ENCODE measurements at regions of chr1 and their contacts with region 1.

Region 1: GRCh38 chr1:111778541-111779051 is 22.9 kb downstream of the DDX20 start:
- DNase-seq: no peak
- ATAC-seq: peak; percentile 49
- H3K4me3 ChIP-seq: no peak overlapping the region
- H3K27ac ChIP-seq: peak overlapping the region; percentile 73; the same call in 1 of the 2 replicates
- H3K4me1 ChIP-seq: peaks cover 23% of the 10 kb centered on the region
- H3K27me3 ChIP-seq: peaks cover 8% of the 10 kb centered on the region
- CTCF ChIP-seq: no peak
- POLR2A ChIP-seq: no peak
- RAD21 ChIP-seq: no peak

Region 2: DNA sequence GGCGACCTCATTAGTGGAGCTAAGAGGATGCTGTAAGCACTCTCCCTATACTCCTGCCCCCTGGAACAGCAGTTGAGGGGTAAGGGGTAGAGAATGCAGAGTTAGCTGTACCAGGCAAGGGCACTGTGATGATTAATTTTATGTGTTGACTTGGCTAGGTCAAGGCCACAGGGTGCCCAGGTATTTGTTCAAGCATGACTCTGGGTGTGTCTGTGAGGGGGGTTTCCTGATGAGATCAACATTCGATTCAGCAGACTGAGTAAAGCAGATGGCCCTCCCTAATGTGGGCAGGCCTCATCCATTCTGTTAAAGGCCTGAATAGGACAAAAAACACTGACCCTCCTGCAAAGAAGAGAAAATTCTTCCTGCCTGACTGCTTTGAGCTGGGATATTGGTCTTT is 100.0 kb after region 1 on chr1:
- CTCF ChIA-PET with region 1: no interaction called
- POLR2A ChIA-PET with region 1: no interaction called
- dilution Hi-C with region 1: no loop called
- in situ Hi-C with region 1: no loop called
- intact Hi-C with region 1: loop called (anchors 5 kb)
- DNase-seq: no peak
- ATAC-seq: peak; percentile 13
- H3K4me3 ChIP-seq: no peak overlapping the region
- H3K27ac ChIP-seq: peak overlapping the region; percentile 71
- H3K4me1 ChIP-seq: peaks cover 15% of the 10 kb centered on the region
- H3K27me3 ChIP-seq: peaks cover 12% of the 10 kb centered on the region
- CTCF ChIP-seq: no peak
- POLR2A ChIP-seq: no peak
- RAD21 ChIP-seq: no peak

Region 3: GRCh38 chr1:111990878-111991718 is 212.5 kb after region 1 on chr1:
- CTCF ChIA-PET with region 1: no interaction called
- POLR2A ChIA-PET with region 1: no interaction called
- dilution Hi-C with region 1: no loop called
- in situ Hi-C with region 1: no loop called
- intact Hi-C with region 1: loop called (anchors 5 kb)
- DNase-seq: no peak
- ATAC-seq: peak; percentile 30
- H3K4me3 ChIP-seq: no peak overlapping the region
- H3K27ac ChIP-seq: no peak overlapping the region
- H3K4me1 ChIP-seq: no peaks in the 10 kb centered on the region
- H3K27me3 ChIP-seq: peaks cover 63% of the 10 kb centered on the region
- CTCF ChIP-seq: 0 out of 2 replicates have a peak, but pooled peaks have one; percentile 11
- POLR2A ChIP-seq: no peak
- RAD21 ChIP-seq: no peak

Region 4: DNA sequence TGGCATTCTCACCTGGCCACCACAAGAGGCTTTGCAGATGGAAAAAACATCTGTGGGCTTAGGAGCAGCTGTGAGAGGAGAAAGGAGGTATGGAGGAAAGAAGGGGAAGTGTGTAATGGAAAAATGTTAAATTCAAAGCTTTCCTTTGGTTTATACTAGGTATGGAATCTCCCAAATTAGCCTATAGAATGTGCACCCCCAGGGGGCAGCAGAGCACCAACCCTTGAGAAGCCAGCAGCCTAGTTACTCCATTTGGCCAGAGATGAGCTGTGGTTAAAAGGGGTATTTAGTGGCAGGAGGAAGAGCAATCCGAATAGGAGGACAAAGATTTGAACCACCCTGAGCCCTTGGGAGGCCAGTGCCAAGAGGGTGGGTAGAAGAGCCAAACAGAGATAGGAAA is 520.0 kb after region 1 on chr1:
- CTCF ChIA-PET with region 1: no interaction called
- POLR2A ChIA-PET with region 1: no interaction called
- dilution Hi-C with region 1: no loop called
- in situ Hi-C with region 1: no loop called
- intact Hi-C with region 1: loop called (anchors 5 kb)
- DNase-seq: peak; percentile 42
- ATAC-seq: peak; percentile 52; the same call in 1 of the 2 replicates
- H3K4me3 ChIP-seq: no peak overlapping the region
- H3K27ac ChIP-seq: no peak overlapping the region
- H3K4me1 ChIP-seq: no peaks in the 10 kb centered on the region
- H3K27me3 ChIP-seq: peaks cover 5% of the 10 kb centered on the region; the same call in 1 of the 2 replicates
- CTCF ChIP-seq: peak; percentile 61
- POLR2A ChIP-seq: no peak
- RAD21 ChIP-seq: peak; percentile 52

Region 5: DNA sequence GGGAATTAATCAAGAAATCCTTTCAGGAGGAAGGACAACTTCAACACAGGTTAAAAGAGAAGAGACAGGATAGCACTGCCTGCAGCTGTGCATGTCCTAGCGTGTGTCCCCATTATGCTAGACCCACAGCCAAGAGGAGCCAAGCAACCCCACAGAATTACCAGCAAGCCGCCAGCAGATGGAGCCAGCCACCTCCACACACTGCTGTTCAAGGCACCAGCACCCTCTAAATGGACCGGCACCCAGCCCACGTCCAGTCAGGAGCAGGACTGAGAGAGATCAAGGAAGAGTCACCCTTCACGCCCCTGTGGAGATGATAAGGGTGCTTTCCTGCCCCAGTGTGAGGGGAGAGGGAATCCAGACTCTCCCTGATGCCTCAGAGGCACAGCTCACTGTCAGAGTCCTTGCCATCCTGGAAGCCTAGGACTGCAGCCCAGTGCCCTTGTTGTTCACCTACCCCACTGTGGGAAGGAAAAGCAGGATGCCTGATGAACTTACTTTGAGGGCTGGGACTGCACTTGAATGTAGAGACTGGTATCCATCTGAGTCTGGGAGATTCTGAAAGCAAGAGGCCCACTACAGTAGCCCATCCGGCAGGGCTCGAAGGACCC is 580.3 kb after region 1 on chr1:
- CTCF ChIA-PET with region 1: no interaction called
- POLR2A ChIA-PET with region 1: no interaction called
- dilution Hi-C with region 1: no loop called
- in situ Hi-C with region 1: no loop called
- intact Hi-C with region 1: loop called (anchors 5 kb)
- DNase-seq: peak; percentile 45
- ATAC-seq: peak; percentile 82
- H3K4me3 ChIP-seq: no peak overlapping the region
- H3K27ac ChIP-seq: peak overlapping the region; percentile 96; the same call in 1 of the 2 replicates
- H3K4me1 ChIP-seq: peaks cover 11% of the 10 kb centered on the region
- H3K27me3 ChIP-seq: peaks cover 26% of the 10 kb centered on the region
- CTCF ChIP-seq: peak; percentile 63
- POLR2A ChIP-seq: no peak
- RAD21 ChIP-seq: peak; percentile 61